A673 (cell line): ENCODE measurements at regions of chr3 and their contacts with region 1.

Region 1: GRCh38 chr3:44976002-44976815 is at the starts of genes EXOSC7 and ZDHHC3:
- DNase-seq: peak; percentile 83
- H3K4me3 ChIP-seq: peak within 1 kb of the TSS; percentile 90
- H3K27ac ChIP-seq: peak within 1 kb of the TSS; percentile 95
- H3K4me1 ChIP-seq: peaks cover 12% of the 10 kb centered on the region
- H3K27me3 ChIP-seq: no peaks in the 10 kb centered on the region
- CTCF ChIP-seq: no peak
- total RNA-seq, gene EXOSC7: 47.4 and 57.3 TPM in 2 replicates
- total RNA-seq, gene ZDHHC3: 94.7 and 95.2 TPM in 2 replicates

Region 2: GRCh38 chr3:44913868-44914468 is 62.2 kb before region 1 on chr3:
- CTCF ChIA-PET with region 1: interaction called, 17 read pairs
- POLR2A ChIA-PET with region 1: no interaction called
- intact Hi-C with region 1: no loop called
- DNase-seq: peak; percentile 71
- H3K4me3 ChIP-seq: no peak overlapping the region
- H3K27ac ChIP-seq: no peak overlapping the region
- H3K4me1 ChIP-seq: peaks cover 7% of the 10 kb centered on the region
- H3K27me3 ChIP-seq: no peaks in the 10 kb centered on the region
- CTCF ChIP-seq: peak; percentile 66

Region 3: GRCh38 chr3:45167011-45167911 is 191.1 kb after region 1 on chr3:
- CTCF ChIA-PET with region 1: no interaction called
- POLR2A ChIA-PET with region 1: no interaction called
- intact Hi-C with region 1: no loop called
- DNase-seq: peak; percentile 84
- H3K4me3 ChIP-seq: no peak overlapping the region
- H3K27ac ChIP-seq: no peak overlapping the region
- H3K4me1 ChIP-seq: peaks cover 6% of the 10 kb centered on the region
- H3K27me3 ChIP-seq: no peaks in the 10 kb centered on the region
- CTCF ChIP-seq: no peak